Right ventricle myocardium inferior (tissue), 1 donor: ENCODE measurements at regions of chr4 and their contacts with region 1.

Region 1: GRCh38 chr4:38319456-38320342 is 344.3 kb upstream of the KLF3 start:
- DNase-seq: peak; percentile 96
- ATAC-seq: peak; percentile 84

Region 2: DNA sequence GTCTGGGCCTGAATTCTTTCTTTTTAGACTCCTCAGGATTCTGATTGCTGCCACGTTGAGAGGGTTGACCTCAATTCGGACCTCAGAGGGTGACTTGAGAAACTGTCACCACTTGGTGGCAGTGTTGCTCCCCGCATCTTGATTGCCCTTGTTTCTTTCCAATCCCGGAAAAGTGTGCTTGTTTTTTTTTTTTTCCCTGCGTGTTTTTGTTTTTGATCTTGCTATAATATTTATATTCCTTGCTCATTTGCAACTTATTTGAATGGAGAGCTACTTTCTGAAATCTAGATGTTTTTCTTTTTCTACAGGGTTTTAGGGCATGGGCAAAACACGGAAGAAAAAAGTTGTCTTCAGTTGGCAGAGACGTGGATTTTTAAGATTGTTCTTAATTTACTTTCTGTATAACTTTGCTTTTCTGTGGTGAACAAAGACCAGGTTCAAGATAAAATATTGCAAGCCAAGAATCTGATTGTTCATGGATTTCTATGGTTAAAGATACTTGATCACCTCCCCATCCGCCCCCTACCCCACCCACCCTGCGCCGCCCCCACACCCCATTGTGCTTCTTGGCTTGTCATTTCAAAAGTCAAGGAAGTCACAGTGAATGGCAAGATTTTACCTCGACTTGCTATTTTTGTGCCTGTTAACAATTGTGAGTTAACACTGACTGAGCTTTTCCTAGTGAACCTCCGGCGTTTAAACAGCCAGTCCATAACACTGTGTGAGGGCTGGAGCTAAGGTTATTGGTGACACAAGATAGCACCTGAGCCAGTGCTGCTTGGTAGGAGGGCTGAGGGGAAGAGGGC is 257.4 kb before region 1 on chr4:
- intact Hi-C with region 1: loop called (anchors 2 kb)
- DNase-seq: no peak
- ATAC-seq: peak; percentile 77

Region 3: GRCh38 chr4:38179690-38180377 is 139.9 kb before region 1 on chr4:
- intact Hi-C with region 1: loop called (anchors 2 kb)
- DNase-seq: no peak
- ATAC-seq: peak; percentile 51

Region 4: GRCh38 chr4:38190717-38191178 is 129.0 kb before region 1 on chr4:
- intact Hi-C with region 1: loop called (anchors 5 kb)
- DNase-seq: no peak
- ATAC-seq: peak; percentile 92

Region 5: DNA sequence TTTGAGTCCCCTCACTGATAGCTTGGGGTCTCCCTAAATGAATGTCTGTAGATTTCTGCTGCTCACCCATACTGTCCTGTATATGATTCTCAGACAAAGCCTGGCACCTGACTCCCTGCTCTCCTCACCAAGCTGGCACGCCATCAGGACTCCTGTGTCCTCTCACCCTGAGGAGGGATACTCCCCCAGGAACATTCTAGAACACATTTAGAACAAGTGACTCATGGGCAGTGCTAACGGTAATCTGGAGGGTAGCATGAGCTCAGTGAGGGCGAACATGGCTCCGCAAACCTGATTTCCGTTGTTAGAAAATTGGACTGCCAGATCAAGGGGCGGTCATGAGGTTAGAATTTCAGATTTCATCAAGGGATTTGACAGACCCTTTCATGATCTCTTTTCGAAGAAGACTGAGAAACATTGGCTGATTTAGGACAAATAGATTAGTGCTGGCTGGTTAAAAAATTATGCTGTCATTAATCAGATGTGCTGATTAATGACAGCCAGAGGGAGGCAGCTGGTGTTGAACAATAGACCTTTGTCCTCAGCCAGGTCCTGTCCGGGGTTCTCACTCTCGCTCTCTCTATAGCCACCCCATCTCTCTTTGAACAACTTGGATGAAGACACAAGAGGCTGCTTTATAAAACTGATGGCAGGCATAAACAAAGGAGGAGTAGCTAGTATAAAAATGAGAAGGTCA is 115.2 kb before region 1 on chr4:
- intact Hi-C with region 1: no loop called
- DNase-seq: no peak
- ATAC-seq: no peak

Region 6: GRCh38 chr4:38230121-38230801 is 89.4 kb before region 1 on chr4:
- intact Hi-C with region 1: no loop called
- DNase-seq: no peak
- ATAC-seq: no peak

Region 7: DNA sequence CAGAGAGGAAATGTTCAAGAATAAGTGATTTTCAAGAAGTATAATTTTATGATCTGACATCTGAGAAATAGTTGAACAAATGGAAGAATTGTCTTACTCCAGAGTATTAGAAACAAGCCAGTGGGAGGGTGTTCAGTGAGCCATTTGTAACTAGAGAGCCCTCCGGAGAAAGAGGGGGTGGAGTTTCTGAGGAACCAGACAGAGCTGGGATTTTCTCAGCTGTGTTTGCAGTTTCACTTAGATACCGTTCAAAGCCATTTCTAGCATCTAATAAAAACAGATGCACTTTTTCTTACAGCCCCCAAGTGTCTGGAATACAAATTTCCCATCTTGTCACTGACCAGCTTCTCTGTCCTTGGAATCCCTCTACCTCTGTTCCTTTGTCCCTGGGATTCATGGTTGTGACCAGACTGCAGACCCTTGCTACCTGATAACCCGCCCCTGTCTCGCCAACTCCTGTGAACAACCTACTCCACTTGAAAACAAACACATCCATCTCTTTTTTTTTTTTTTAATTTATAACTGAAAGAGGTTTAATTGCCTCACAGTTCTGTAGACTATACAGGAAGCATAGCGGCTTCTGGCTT is 211.5 kb after region 1 on chr4:
- intact Hi-C with region 1: no loop called
- DNase-seq: no peak
- ATAC-seq: no peak

Region 8: GRCh38 chr4:38562751-38563198 is 243.1 kb after region 1 on chr4:
- intact Hi-C with region 1: no loop called
- DNase-seq: peak; percentile 73
- ATAC-seq: peak; percentile 86

Region 9: GRCh38 chr4:38663801-38664705 is 344.4 kb after region 1 on chr4 and contains the start of gene KLF3:
- intact Hi-C with region 1: loop called (anchors 2 kb)
- DNase-seq: peak; percentile 99
- ATAC-seq: peak; percentile 90
- total RNA-seq, gene KLF3: 18.9 TPM

Region 10: GRCh38 chr4:38675146-38676121 is 355.7 kb after region 1 on chr4:
- intact Hi-C with region 1: loop called (anchors 1 kb)
- DNase-seq: no peak
- ATAC-seq: peak; percentile 49

Region 11: GRCh38 chr4:38730830-38731646 is 411.3 kb after region 1 on chr4:
- intact Hi-C with region 1: loop called (anchors 10 kb)
- DNase-seq: peak; percentile 92
- ATAC-seq: peak; percentile 85